Panc1 (cell line): ENCODE measurements at regions of chr11 and their contacts with region 1.

Region 1: GRCh38 chr11:67230406-67230805 is 35.9 kb upstream of the GRK2 start:
- DNase-seq: no peak
- ATAC-seq: no peak
- H3K4me3 ChIP-seq: no peak overlapping the region
- H3K27ac ChIP-seq: no peak overlapping the region
- H3K4me1 ChIP-seq: no peaks in the 10 kb centered on the region
- H3K27me3 ChIP-seq: no peaks in the 10 kb centered on the region
- CTCF ChIP-seq: no peak

Region 2: DNA sequence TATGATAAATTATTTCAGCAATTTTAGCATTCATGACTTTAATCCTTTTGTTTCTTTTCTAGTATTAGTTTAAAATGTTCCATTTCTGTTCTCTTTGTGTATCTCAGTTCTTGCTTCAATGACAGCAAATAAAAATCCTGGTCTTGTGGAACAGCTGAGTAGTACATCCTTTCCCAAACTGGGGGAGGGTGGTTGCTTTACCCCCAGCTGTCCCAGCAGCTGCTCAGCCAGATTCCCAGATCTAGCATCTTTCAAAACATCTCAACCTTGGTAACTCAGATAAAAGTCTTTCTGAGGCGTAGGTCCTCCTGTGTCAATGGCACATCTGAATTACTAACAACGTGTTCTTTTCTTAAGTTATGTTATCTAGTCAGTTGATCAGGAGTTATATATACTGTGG is 36.3 kb before region 1 on chr11:
- CTCF ChIA-PET with region 1: no interaction called
- POLR2A ChIA-PET with region 1: no interaction called
- in situ Hi-C with region 1: loop called (anchors 5 kb)
- intact Hi-C with region 1: no loop called
- DNase-seq: no peak
- ATAC-seq: no peak
- H3K4me3 ChIP-seq: no peak overlapping the region
- H3K27ac ChIP-seq: no peak overlapping the region
- H3K4me1 ChIP-seq: no peaks in the 10 kb centered on the region
- H3K27me3 ChIP-seq: no peaks in the 10 kb centered on the region
- CTCF ChIP-seq: no peak

Region 3: DNA sequence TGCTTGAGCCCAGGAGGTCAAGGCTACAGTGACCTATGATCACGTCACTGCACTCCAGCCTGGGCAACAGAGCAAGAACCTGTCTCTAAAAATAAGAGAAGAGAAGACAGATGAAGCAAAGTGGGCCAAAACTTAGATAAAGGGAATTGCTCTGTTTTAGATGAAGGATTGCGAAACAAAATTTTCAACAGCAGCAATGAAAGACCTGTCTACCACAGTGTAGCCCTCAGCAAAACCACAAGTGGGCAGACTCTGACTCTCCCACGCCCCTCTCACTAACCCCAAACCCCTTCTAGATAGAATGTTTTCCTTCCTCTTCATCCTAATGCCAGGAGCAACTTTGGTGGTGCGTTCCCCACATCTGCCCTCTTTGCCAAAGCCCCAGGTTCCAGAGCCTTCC is 549.6 kb after region 1 on chr11:
- CTCF ChIA-PET with region 1: no interaction called
- POLR2A ChIA-PET with region 1: no interaction called
- in situ Hi-C with region 1: no loop called
- intact Hi-C with region 1: no loop called
- DNase-seq: no peak
- ATAC-seq: no peak
- H3K4me3 ChIP-seq: no peak overlapping the region
- H3K27ac ChIP-seq: no peak overlapping the region
- H3K4me1 ChIP-seq: no peaks in the 10 kb centered on the region
- H3K27me3 ChIP-seq: peaks cover 3% of the 10 kb centered on the region; the same call in 1 of the 2 replicates
- CTCF ChIP-seq: no peak